ENCODE measurements at regions of chr4 and their contacts with region 1.

Region 1: DNA sequence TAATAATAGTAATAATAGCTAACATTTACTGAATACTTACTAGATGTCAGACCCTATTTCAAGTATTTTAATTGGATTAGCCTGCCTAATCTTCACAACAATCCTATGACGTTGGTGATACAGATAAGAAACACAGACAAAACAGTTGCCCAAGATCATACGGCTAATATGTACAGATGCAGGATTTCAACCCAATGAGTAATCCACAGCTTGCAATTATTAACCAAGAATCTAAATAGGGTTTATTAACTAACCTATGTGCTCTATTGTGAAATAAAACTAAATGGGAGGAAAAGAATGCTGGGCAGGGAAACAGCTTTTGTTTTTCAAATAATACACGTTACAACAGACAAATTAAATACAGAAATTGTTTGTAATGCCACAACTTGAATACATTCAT is 23.4 kb downstream of the FBXO8 start:
- DNase-seq: no peak
- ATAC-seq: no peak
- H3K4me3 ChIP-seq: no peak overlapping the region
- H3K4me3 Mint-ChIP-seq: no peak overlapping the region
- H3K27ac ChIP-seq: no peak overlapping the region
- H3K27ac Mint-ChIP-seq: no peak overlapping the region
- H3K4me1 ChIP-seq: no peaks in the 10 kb centered on the region
- H3K4me1 Mint-ChIP-seq: peaks cover 13% of the 10 kb centered on the region
- H3K27me3 ChIP-seq: no peaks in the 10 kb centered on the region
- H3K27me3 Mint-ChIP-seq: no peaks in the 10 kb centered on the region
- CTCF ChIP-seq: no peak

Region 2: DNA sequence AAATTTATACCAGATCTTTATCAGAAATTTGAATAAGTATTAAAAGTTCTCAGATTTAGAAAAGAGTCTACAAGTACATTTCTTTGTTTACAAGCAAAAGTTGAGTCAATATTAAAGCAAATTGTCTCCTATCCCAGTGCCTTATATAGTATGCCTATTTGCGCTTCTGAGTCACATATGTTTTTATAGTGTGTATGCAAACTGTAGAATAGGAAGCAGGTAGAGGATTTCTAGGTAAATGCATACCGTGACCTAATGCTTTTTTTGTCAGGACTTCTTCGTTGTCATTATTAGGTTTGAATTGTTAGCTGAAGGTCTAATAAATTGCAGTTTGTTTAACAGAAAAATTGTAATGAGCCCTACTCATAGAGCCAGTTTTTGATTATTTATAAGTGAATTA is 45.9 kb after region 1 on chr4:
- CTCF ChIA-PET with region 1: no interaction called
- POLR2A ChIA-PET with region 1: no interaction called
- intact Hi-C with region 1: no loop called
- DNase-seq: no peak
- ATAC-seq: no peak
- H3K4me3 ChIP-seq: no peak overlapping the region
- H3K4me3 Mint-ChIP-seq: no peak overlapping the region
- H3K27ac ChIP-seq: no peak overlapping the region
- H3K27ac Mint-ChIP-seq: no peak overlapping the region
- H3K4me1 ChIP-seq: no peaks in the 10 kb centered on the region
- H3K4me1 Mint-ChIP-seq: peaks cover 1% of the 10 kb centered on the region
- H3K27me3 ChIP-seq: no peaks in the 10 kb centered on the region
- H3K27me3 Mint-ChIP-seq: no peaks in the 10 kb centered on the region
- CTCF ChIP-seq: no peak

Region 3: GRCh38 chr4:175308236-175308635 is 1048.1 kb after region 1 on chr4:
- CTCF ChIA-PET with region 1: no interaction called
- POLR2A ChIA-PET with region 1: no interaction called
- intact Hi-C with region 1: loop called in 1 of 2 experiments (anchors 5 kb)
- DNase-seq: no peak
- ATAC-seq: no peak
- H3K4me3 ChIP-seq: no peak overlapping the region
- H3K4me3 Mint-ChIP-seq: no peak overlapping the region
- H3K27ac ChIP-seq: no peak overlapping the region
- H3K27ac Mint-ChIP-seq: no peak overlapping the region
- H3K4me1 ChIP-seq: no peaks in the 10 kb centered on the region
- H3K4me1 Mint-ChIP-seq: no peaks in the 10 kb centered on the region
- H3K27me3 ChIP-seq: no peaks in the 10 kb centered on the region
- H3K27me3 Mint-ChIP-seq: no peaks in the 10 kb centered on the region
- CTCF ChIP-seq: no peak